ENCODE measurements at regions of chr10 and their contacts with region 1.

Region 1: GRCh38 chr10:115092555-115093285 is 445 bp upstream of the ATRNL1 start:
- DNase-seq: peak in 9 of 10 donors; percentile 22 to 89 (median 40)

Region 2: DNA sequence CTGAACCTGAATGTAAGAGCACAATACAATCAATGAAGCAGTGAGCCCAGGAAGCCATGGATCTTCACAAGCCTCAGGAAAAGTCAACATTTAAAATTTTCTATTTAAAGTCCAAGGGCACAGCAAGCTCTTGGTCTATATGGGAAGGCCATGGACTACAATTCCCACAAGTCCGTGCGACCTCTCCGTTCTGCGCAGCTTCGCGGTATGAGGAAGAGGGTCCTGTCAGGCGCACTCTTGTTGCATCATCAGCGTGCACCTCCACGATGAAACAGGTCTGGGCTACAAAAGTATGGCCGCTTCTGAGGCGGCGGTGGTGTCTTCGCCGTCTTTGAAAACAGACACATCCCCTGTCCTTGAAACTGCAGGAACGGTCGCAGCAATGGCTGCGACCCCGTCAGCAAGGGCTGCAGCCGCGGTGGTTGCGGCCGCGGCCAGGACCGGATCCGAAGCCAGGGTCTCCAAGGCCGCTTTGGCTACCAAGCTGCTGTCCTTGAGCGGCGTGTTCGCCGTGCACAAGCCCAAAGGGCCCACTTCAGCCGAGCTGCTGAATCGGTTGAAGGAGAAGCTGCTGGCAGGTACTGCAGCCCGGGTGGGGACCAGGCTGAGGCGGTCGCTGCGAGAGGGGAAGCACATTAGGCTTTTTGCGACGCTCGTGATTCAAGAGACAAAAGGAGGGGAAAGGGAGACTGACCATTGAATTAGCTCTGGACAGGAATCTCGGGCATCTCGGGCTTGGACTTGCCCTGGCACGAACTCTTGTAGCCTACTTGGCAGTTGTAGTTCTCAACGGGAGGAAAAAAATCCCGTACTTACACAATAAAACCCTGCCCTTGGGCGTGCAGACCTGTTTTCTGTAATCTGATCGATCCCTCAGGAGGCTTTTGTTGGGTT is 154.5 kb before region 1 on chr10 and contains the start of gene TRUB1:
- intact Hi-C with region 1: loop called (anchors 10 kb)
- DNase-seq: peak; percentile 92 to 99 (median 96)

Region 3: GRCh38 chr10:115209133-115209532 is 116.4 kb after region 1 on chr10:
- intact Hi-C with region 1: no loop called
- DNase-seq: no peak

Region 4: GRCh38 chr10:115624448-115624847 is 531.7 kb after region 1 on chr10:
- intact Hi-C with region 1: no loop called
- DNase-seq: no peak